IMR-90 (cell line): ENCODE measurements at regions of chr2 and their contacts with region 1.

Region 1: DNA sequence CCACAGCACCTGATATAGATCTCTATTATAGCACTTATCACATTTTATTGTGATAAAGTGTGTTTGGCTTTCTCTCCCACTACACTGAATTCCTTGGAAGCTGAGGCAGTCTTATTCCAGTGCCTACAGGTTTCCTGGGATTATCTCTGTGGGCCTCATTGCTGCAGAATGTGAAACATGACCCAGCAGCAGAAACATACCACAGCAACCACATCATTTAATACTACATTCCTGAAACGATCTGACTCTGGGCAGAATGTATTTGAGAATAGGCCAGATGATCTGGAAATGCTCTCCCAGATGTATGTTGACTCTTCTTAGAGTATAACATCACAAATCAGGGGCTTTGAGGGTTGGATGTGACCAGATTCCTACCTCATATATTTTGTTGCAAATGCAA is 323.5 kb upstream of the TANK start:
- DNase-seq: peak; percentile 96
- ATAC-seq: peak; percentile 97
- H3K4me3 ChIP-seq: no peak overlapping the region
- H3K27ac ChIP-seq: peak overlapping the region; percentile 76; the same call in 1 of the 2 replicates
- H3K4me1 ChIP-seq: peaks cover 5% of the 10 kb centered on the region
- H3K27me3 ChIP-seq: no peaks in the 10 kb centered on the region
- CTCF ChIP-seq: no peak
- POLR2A ChIP-seq: no peak
- RAD21 ChIP-seq: no peak

Region 2: DNA sequence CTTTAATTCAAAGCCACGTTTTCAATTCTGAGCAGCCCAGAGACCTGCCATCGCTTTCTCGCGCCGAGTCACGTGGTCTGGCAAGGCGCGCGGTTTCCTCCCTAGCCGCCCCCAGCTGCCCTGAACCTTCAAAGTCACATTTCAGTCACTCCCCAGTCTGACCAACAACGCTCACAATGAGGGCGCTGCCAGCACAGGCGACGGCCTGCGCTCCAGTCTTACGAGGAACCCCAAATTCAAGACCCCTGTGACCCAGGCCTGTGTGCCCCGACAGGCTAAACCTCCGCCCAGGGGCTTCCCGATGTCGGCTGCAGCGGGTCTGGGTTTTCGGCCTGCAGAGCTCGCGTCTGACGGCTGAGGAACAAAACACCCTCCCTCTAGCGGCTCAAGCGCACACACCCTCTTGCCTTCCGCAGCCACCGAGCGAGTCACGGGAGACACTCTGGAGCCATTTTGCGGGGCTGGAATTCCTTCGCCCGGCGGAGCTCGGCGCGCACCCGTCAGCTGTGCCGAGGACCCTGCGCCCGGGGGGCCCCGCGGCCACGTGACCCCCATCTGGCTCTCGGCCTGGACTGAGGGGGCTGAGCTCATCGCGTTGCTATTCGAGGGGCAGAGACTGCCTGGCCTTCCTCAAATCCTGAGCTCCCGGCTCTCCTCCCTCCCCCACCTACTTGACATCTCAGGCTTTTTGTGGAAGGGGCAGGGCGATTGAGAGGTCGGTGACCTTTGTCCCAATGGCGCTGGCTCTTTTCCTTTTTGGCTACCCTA is 566.8 kb before region 1 on chr2:
- CTCF ChIA-PET with region 1: no interaction called
- POLR2A ChIA-PET with region 1: no interaction called
- dilution Hi-C with region 1: no loop called
- in situ Hi-C with region 1: no loop called
- intact Hi-C with region 1: loop called (anchors 5 kb)
- DNase-seq: peak; percentile 92
- ATAC-seq: peak; percentile 91
- H3K4me3 ChIP-seq: peak overlapping the region; percentile 43
- H3K27ac ChIP-seq: peak overlapping the region; percentile 86
- H3K4me1 ChIP-seq: peaks cover 20% of the 10 kb centered on the region
- H3K27me3 ChIP-seq: no peaks in the 10 kb centered on the region
- CTCF ChIP-seq: peak; percentile 68
- POLR2A ChIP-seq: no peak
- RAD21 ChIP-seq: peak; percentile 57

Region 3: DNA sequence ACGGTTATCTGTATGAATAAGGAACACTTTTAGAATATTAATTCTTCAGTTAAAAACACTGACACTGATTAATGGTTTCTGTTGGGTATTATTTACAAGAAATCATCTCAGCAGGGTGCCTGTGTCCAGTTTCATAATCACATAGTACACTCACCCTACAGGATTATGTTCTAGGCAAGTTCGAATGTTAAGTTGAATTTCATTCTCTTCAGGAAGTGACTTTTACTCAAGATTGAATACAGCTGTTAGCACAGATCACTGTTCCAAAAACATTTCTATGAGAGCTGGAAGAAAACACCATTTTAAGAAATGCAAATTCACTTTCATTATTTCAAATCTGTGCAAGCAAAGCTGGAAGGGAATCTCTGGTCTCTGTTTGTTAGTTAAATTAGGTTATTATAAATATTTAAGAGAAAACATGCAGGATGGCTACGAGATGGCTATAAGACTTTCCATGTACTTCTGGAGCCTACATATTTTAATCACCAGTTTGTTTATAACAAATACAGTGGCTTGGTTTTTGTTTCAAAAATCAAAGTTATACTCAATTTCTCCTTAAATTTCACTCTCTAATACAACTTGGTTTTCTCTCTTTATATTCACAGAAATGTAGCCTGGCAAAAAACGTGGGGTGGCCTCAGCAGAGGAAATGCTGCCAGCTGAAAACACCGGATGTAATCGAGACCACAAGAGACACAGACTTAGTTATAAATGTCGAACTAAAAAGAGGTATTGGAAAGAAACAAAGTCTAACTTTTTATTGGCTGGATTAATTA is 408.9 kb before region 1 on chr2:
- CTCF ChIA-PET with region 1: no interaction called
- POLR2A ChIA-PET with region 1: no interaction called
- dilution Hi-C with region 1: no loop called
- in situ Hi-C with region 1: no loop called
- intact Hi-C with region 1: no loop called
- DNase-seq: peak; percentile 87
- ATAC-seq: peak; percentile 64
- H3K4me3 ChIP-seq: peak overlapping the region; percentile 10; the same call in 1 of the 2 replicates
- H3K27ac ChIP-seq: peak overlapping the region; percentile 76; the same call in 1 of the 2 replicates
- H3K4me1 ChIP-seq: peaks cover 14% of the 10 kb centered on the region
- H3K27me3 ChIP-seq: no peaks in the 10 kb centered on the region
- CTCF ChIP-seq: no peak
- POLR2A ChIP-seq: no peak
- RAD21 ChIP-seq: no peak

Region 4: DNA sequence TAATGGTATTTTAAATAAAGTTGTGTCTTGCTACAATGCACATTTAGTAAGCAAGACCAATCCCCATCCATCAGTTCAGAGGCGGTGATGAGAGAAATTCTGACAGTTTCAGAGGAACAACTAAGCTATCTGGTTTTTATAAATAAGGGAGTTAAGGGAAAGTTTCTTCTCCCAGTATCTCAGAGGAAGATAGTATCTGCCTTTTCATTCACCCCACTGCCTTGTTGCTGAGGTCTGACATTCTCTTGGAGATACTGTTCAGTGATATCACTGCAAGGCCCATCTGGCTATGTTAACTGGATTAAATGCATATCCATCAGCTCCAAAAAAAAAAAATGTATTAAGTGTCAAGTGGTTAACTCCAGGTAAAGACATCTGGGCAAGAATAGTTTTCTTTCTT is 391.1 kb before region 1 on chr2:
- CTCF ChIA-PET with region 1: no interaction called
- POLR2A ChIA-PET with region 1: no interaction called
- dilution Hi-C with region 1: no loop called
- in situ Hi-C with region 1: no loop called
- intact Hi-C with region 1: no loop called
- DNase-seq: no peak
- ATAC-seq: no peak
- H3K4me3 ChIP-seq: no peak overlapping the region
- H3K27ac ChIP-seq: no peak overlapping the region
- H3K4me1 ChIP-seq: no peaks in the 10 kb centered on the region; the same call in none of the 2 replicates
- H3K27me3 ChIP-seq: no peaks in the 10 kb centered on the region
- CTCF ChIP-seq: no peak
- POLR2A ChIP-seq: no peak
- RAD21 ChIP-seq: no peak